Activated CD4-positive, alpha-beta memory T cell treated with anti-CD3 and anti-CD28 coated beads, Interleukin-2, amount 10 ng/mL, durations not matched to agents 7 days and 5 days (primary cell): ENCODE measurements at regions of chr11 and their contacts with region 1.

Region 1: GRCh38 chr11:36376888-36377758 is 81.0 kb downstream of the PRR5L start:
- DNase-seq: peak; percentile 81
- H3K4me3 Mint-ChIP-seq: peak overlapping the region; percentile 93
- H3K27ac Mint-ChIP-seq: peak overlapping the region; percentile 77
- H3K4me1 Mint-ChIP-seq: peaks cover 45% of the 10 kb centered on the region
- H3K27me3 Mint-ChIP-seq: peaks cover 37% of the 10 kb centered on the region

Region 2: DNA sequence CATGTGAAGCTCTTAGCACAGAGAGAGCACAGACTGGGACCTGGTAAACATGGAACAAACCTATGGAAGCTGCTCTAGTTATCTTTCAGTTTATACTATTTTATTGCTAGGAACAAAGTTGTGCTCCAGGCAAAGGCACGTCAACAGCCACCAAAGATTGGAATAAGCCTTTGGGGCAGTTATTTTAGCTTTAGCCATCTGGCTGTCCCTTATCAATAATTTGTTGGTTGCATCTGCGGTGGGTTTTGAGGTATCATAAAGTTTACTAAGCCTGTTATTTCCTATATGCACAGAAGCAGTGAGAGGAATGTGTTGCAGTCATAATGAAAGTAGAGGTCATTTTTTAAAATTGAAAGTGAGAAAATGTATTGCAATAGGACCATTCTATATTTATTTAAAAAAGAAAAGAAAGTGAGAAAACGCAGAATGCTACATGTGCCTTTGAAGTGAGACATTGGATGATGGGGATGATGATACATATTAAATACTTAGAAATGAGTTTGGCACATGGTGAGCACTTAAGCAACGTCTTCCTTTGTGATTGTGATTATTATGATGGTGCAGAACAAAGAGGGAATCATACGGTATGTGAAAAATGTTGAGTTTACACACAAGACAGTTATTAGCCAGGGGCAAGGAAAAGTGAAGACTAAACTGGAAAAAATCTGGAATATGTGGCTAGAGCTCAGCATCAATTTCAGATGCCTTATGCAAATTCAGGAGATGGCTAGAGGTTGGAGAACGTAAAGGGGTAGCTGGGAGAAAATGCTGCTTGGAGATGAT is 22.7 kb before region 1 on chr11:
- CTCF ChIA-PET with region 1: interaction called, 17 read pairs
- POLR2A ChIA-PET with region 1: interaction called, 19 read pairs
- DNase-seq: no peak
- H3K4me3 Mint-ChIP-seq: peak overlapping the region; percentile 1
- H3K27ac Mint-ChIP-seq: no peak overlapping the region
- H3K4me1 Mint-ChIP-seq: peaks cover 60% of the 10 kb centered on the region
- H3K27me3 Mint-ChIP-seq: peaks cover 37% of the 10 kb centered on the region

Region 3: DNA sequence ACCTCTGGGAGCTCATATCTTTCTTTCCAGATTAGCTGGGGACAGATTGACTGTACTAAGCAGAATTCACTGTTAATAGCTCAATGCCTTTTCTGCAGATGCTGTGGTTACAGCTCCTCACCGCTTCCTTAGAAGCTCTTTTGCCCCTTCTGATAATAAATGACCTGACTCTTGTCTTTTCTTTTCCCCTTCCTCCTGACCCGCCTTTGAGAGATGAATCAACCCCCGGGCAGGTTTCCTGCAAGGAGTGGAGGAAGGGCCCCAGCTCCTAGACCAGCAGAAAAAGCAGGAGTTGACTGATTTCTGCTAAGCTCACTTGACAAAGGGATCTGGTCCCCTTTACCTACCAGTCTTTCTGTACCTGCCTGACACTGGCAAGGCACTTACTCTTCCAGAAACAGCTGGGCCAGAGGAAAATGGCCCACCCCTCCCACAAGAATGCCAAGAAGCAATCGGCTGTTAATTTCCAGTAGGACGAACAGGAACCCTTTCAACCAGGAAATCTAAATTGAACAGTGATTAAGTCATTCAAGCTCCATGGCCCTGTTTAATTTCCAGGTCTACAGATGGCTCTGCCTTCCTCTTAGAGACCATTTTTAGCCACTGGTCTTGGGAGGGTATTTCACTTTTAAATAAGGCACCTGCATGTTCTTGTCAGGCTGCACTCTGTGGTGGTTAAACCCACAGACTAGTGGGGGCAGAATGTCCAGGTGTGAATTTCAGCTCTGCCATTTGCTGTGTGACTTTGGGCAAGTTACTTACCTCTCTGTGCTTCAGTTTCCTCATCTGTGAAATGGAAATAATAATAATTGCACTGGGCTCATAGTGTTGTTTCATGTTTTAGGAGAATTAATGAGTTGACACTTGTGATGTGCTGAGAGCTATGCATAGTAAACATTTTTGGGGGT is 13.5 kb before region 1 on chr11:
- CTCF ChIA-PET with region 1: interaction called, 44 read pairs
- POLR2A ChIA-PET with region 1: interaction called, 16 read pairs
- DNase-seq: no peak
- H3K4me3 Mint-ChIP-seq: no peak overlapping the region
- H3K27ac Mint-ChIP-seq: peak overlapping the region; percentile 28
- H3K4me1 Mint-ChIP-seq: peaks cover 51% of the 10 kb centered on the region
- H3K27me3 Mint-ChIP-seq: peaks cover 28% of the 10 kb centered on the region

Region 4: DNA sequence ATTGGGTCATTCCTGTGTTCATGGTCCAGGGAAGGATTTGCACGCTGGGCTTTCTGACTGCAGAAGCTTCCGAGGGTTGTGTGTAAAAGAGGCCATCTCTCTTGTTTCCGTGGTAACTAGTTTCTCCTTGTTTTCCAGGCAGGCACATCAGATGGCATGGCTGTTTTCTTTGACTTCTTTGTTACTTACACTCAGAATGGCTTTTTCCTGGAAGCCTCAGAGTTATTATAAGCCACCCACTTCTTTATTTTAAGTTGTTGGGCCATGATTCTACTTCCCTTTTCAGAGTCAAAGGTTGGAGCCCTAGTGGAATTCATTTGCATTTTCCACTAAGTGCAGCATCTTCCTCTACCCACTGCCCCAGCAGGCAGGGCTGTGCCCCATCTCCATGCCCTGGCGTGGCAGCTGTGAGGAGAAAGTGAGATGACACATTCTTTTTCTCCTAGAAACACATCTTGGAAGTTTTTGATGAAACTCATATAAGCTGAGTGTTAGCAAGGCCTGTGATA is 13.9 kb after region 1 on chr11:
- CTCF ChIA-PET with region 1: interaction called, 6 read pairs
- POLR2A ChIA-PET with region 1: interaction called, 16 read pairs
- DNase-seq: no peak
- H3K4me3 Mint-ChIP-seq: no peak overlapping the region
- H3K27ac Mint-ChIP-seq: peak overlapping the region; percentile 61
- H3K4me1 Mint-ChIP-seq: peaks cover 84% of the 10 kb centered on the region
- H3K27me3 Mint-ChIP-seq: no peaks in the 10 kb centered on the region

Region 5: GRCh38 chr11:36421546-36422155 is 44.5 kb after region 1 on chr11:
- CTCF ChIA-PET with region 1: interaction called, 13 read pairs
- POLR2A ChIA-PET with region 1: interaction called, 27 read pairs
- DNase-seq: no peak
- H3K4me3 Mint-ChIP-seq: peak overlapping the region; percentile 34
- H3K27ac Mint-ChIP-seq: peak overlapping the region; percentile 80
- H3K4me1 Mint-ChIP-seq: peaks cover 64% of the 10 kb centered on the region
- H3K27me3 Mint-ChIP-seq: no peaks in the 10 kb centered on the region

Region 6: DNA sequence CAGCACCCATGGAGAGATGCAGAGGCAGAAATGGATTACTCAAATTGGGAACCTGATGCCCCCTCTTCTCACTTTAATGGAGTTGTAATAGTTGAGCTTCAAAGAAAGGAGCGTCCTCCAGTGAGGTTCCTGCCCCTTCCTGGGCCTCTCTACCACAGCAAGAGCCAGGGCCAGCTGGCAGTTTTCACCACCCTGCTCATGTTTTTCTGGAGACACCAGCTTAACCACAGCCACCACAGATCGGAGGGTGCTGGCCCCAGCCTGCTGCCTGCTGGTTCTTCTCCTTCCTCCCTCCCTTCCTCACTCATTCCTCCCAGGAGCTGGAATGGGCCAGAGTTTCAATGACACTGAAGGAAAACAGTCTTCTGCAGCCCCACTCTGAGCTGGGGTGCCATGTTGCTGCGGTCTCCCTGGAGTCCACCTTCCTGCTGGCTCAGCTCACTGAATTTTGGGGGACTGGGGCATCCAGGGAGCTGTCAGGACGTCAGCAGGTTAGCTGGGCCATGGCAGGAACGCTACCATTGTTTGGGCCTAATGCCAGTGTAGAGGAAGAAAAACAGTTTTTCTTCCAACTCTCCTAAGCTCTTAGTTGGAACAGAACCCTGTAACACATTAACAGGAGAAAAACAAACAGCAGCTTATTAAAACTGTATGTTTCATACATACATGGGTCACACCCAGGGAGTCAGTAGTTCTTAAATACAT is 75.3 kb after region 1 on chr11:
- CTCF ChIA-PET with region 1: interaction called, 7 read pairs
- POLR2A ChIA-PET with region 1: interaction called, 26 read pairs
- DNase-seq: peak; percentile 63
- H3K4me3 Mint-ChIP-seq: no peak overlapping the region
- H3K27ac Mint-ChIP-seq: peak overlapping the region; percentile 68
- H3K4me1 Mint-ChIP-seq: peaks cover 52% of the 10 kb centered on the region
- H3K27me3 Mint-ChIP-seq: peaks cover 2% of the 10 kb centered on the region